Activated naive CD4-positive, alpha-beta T cell treated with anti-CD3 and anti-CD28 coated beads for 36 hours (primary cell): ENCODE measurements at regions of chr6 and their contacts with region 1.

Region 1: GRCh38 chr6:160005861-160006540 is 37.1 kb downstream of the IGF2R start:
- DNase-seq: no peak
- H3K4me3 Mint-ChIP-seq: no peak overlapping the region
- H3K27ac Mint-ChIP-seq: no peak overlapping the region
- H3K4me1 Mint-ChIP-seq: peaks cover 35% of the 10 kb centered on the region
- H3K27me3 Mint-ChIP-seq: no peaks in the 10 kb centered on the region

Region 2: GRCh38 chr6:160041608-160042007 is 35.6 kb after region 1 on chr6:
- CTCF ChIA-PET with region 1: interaction called, 3 read pairs
- intact Hi-C with region 1: loop called (anchors 2 kb)
- DNase-seq: no peak
- H3K4me3 Mint-ChIP-seq: no peak overlapping the region
- H3K27ac Mint-ChIP-seq: no peak overlapping the region
- H3K4me1 Mint-ChIP-seq: peaks cover 9% of the 10 kb centered on the region
- H3K27me3 Mint-ChIP-seq: no peaks in the 10 kb centered on the region